ENCODE measurements at regions of chr22 and their contacts with region 1.

Region 1: GRCh38 chr22:36977947-36978660 is 41.1 kb downstream of the TST start:
- DNase-seq: peak; percentile 83 to 97 (median 93)
- ATAC-seq: peak; percentile 100
- H3K4me3 ChIP-seq: peak overlapping the region; percentile 23 to 37
- H3K27ac ChIP-seq: peak overlapping the region in 1 of 2 donors; percentile 82
- H3K4me1 ChIP-seq: peaks cover 5 to 26% of the 10 kb centered on the region in 2 donors
- H3K27me3 ChIP-seq: no peaks in the 10 kb centered on the region
- CTCF ChIP-seq: peak; percentile 91 to 96

Region 2: DNA sequence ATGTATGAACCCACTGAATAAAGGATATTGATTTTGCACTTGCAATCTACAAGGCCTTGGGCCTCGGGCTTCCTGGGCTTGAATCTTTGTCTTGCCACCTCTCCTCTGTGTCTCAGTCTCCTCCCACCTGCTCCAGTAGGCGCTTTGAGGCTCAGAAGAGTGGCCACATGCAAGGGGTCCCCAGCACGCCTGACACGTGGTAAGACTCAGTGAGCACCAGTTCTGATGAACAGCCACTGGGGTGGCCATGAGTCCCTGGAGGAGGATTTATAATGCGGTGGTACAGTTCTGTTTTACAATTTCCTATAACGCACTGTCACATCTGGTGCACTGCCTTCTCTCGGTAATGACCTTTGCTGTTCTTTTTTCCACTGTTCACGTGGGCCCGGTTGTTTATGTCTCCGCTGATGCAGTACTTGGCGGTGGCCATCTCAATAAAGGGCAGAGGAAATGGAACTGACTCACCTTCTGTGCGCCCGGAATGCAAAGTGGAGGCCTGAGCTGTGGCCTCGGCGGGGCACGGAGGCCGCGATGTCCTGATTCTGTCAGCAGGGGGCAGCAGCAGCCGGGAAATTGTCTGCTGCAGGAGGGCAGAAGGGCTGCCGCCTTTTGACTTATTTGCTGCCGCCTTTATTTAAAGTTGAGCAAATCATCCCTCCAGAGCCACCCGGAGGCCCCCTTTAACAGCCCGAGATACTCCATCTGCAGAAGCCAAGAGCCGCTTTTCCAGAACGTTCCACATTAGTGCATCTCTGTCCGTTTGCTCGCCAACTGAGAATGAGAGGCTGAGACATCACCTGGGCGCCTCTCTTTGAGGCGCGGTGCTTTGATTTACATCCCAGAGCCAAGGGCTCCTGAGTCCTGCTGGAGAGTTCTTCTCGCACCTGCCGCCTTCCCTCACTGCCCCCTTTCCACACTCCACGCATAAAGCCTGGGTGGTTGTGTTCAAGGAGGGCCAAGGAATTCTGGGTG is 196.2 kb before region 1 on chr22:
- intact Hi-C with region 1: loop called in 1 of 2 experiments (anchors 5 kb)
- DNase-seq: peak; percentile 40 to 95 (median 75)
- ATAC-seq: peak; percentile 99
- H3K4me3 ChIP-seq: no peak overlapping the region
- H3K27ac ChIP-seq: no peak overlapping the region
- H3K4me1 ChIP-seq: peaks cover 0 to 11% of the 10 kb centered on the region in 2 donors
- H3K27me3 ChIP-seq: peaks cover 0 to 40% of the 10 kb centered on the region in 2 donors
- CTCF ChIP-seq: peak; percentile 82 to 98

Region 3: GRCh38 chr22:36856121-36856791 is 121.8 kb before region 1 on chr22:
- intact Hi-C with region 1: loop called in 1 of 2 experiments (anchors 5 kb)
- DNase-seq: peak; percentile 85 to 98 (median 94)
- ATAC-seq: peak; percentile 94
- H3K4me3 ChIP-seq: no peak overlapping the region
- H3K27ac ChIP-seq: peak overlapping the region in 1 of 2 donors; percentile 96
- H3K4me1 ChIP-seq: peaks cover 0 to 55% of the 10 kb centered on the region in 2 donors
- H3K27me3 ChIP-seq: peaks cover 0 to 7% of the 10 kb centered on the region in 2 donors
- CTCF ChIP-seq: peak; percentile 100

Region 4: DNA sequence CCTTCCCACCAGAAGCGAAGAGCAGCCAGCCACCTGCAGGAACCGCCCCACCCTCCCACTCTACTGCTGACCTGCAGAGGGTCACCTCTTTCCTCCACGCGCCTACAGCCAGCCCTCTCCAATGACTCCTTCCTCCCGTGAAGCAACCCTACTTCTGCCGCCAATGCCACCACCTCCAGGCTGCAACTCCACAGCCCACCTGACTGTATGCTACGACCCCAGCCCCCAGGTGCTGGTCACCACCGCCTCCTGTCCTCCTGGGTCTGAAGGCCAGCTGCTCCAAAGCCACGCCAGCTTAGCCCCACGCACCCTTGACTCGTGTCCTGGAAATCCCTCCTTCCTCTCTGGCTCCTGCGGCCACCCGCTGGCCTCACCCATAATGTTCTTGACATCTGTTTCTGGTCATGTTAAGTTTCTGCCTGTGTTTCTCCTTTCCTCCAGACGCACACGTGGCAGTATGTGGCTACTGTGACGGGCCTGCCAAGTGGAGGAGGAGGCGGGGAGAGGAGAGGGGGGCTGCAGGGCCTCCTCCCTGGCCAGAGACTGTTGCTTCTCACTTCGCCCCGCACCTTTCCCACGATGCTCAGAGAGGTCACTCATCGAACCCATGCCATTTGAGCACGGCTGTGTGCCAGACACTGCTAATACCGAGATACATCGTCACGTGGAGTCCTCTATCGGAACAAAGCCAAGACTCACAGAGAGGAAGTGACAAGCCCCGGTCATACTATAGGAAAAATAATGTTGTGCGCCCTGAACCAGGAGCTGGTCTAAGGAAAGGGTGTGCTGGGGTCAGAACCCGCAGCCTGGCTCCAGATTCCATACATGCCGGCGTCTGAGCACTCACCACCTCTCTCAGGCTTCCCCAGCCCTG is 198.4 kb after region 1 on chr22:
- intact Hi-C with region 1: no loop called
- DNase-seq: peak; percentile 78 to 89 (median 84)
- ATAC-seq: peak; percentile 84
- H3K4me3 ChIP-seq: peak overlapping the region in 1 of 2 donors; percentile 9
- H3K27ac ChIP-seq: peak overlapping the region; percentile 22 to 74
- H3K4me1 ChIP-seq: peaks cover 25 to 50% of the 10 kb centered on the region in 2 donors
- H3K27me3 ChIP-seq: peaks cover 0 to 14% of the 10 kb centered on the region in 2 donors
- CTCF ChIP-seq: no peak

Measured in left lung (tissue), 14 donors.